ENCODE measurements at regions of chr1 and their contacts with region 1.

Region 1: GRCh38 chr1:92817986-92818764 is 13.7 kb upstream of the RPL5 start:
- DNase-seq: no peak
- H3K4me3 ChIP-seq: no peak overlapping the region
- CTCF ChIP-seq: peak; percentile 70

Region 2: GRCh38 chr1:92310185-92310597 is 508.0 kb before region 1 on chr1:
- CTCF ChIA-PET with region 1: interaction called, 12 read pairs
- POLR2A ChIA-PET with region 1: no interaction called
- DNase-seq: no peak
- H3K4me3 ChIP-seq: no peak overlapping the region
- CTCF ChIP-seq: peak; percentile 25

Region 3: GRCh38 chr1:92754000-92754718 is 64.0 kb before region 1 on chr1:
- CTCF ChIA-PET with region 1: interaction called, 113 read pairs
- POLR2A ChIA-PET with region 1: no interaction called
- DNase-seq: peak; percentile 72
- H3K4me3 ChIP-seq: no peak overlapping the region
- CTCF ChIP-seq: no peak

Region 4: DNA sequence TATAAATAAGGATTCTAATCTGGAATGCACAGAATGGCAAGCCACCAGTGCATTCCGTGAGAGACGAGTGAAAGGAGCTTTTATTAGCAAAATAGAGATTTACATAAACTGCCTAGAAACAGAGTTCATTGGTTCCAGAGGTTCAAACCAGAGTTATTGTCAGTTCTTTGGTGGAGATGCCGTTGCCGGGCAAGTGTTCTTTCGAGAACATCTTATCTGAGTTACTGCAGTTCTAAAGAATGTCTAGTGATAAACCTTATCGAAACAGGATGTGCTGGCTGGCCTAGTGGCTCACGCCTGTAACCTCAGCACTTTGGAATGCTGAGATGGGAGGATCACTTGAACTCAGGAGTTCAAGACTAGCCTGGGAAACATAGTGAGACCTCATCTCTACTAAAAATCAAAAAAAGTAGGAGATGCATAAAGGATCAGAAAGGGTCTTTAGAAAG is 13.4 kb before region 1 on chr1:
- CTCF ChIA-PET with region 1: interaction called, 22 read pairs
- POLR2A ChIA-PET with region 1: no interaction called
- DNase-seq: peak; percentile 78
- H3K4me3 ChIP-seq: no peak overlapping the region
- CTCF ChIP-seq: no peak

Region 5: GRCh38 chr1:92831762-92832536 is 13.8 kb after region 1 on chr1 and contains the start of gene RPL5:
- CTCF ChIA-PET with region 1: interaction called, 65 read pairs
- POLR2A ChIA-PET with region 1: no interaction called
- DNase-seq: peak; percentile 73
- H3K4me3 ChIP-seq: peak within 1 kb of the TSS; percentile 98
- CTCF ChIP-seq: peak; percentile 98

Measured in AG04449 (cell line).